PC-9 (cell line): ENCODE measurements at regions of chr1 and their contacts with region 1.

Region 1: DNA sequence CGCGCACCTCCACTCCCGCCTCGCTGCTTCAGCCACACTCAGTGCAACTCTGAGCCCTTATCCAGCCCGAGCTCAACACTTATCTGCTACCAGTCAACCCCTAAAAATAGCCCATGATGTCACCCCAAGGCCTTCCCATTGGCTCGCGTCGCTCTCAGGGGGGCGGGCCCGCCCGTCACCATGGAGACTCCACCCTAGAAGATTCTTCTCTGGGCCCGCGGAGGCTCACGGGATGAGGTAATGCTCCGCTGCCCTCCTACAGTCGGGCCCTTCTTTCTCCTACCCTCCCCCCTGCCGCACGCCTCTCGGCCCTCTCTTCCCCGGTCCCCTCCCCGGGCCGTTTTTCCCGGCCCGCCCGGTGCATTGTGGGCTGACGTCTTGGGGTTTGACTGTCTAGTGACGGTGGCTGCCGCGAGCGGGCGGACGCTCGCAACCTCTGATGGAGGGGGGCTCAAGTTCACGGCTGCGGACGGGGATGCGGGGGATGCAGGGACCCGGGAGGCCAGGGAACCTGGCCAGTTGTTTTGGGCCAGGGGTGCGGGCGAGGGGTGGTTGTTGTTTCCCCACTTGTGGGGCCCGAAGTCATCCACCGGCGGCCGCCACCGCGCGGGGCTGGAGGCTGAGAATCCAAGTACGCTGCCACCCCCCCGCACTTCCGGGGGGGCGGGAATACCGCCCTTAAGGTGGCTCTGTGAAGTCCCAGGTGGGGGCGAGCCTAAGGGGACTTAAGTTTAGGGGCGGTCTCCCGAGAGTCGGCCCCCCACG is at the start of gene JUN:
- DNase-seq: peak; percentile 96 to 99
- H3K4me3 ChIP-seq: peak within 1 kb of the TSS; percentile 94
- H3K27ac ChIP-seq: peak within 1 kb of the TSS; percentile 99
- H3K4me1 ChIP-seq: peaks cover 33% of the 10 kb centered on the region
- H3K27me3 ChIP-seq: no peaks in the 10 kb centered on the region
- CTCF ChIP-seq: no peak
- total RNA-seq, gene JUN: 74.7 and 93.7 TPM in 2 replicates

Region 2: DNA sequence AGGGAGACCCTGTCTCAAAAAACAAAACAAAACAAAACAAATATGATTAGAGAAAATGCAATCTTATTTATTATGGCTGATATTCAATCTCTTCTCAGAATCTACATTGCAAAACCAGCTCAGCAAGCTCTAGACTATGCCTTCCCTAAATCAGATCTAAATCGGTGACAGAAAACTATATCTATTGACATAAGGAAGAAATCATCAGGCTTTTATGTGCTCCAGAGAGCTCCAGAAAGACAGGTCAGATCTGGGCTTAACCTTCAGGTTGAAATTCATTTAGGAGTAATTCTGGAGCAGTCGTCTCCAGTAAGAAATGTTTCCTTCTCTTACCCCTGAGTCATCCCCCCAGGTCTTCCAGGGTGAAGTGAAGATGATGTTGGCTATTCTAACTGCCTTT is 138.1 kb before region 1 on chr1:
- CTCF ChIA-PET with region 1: no interaction called
- POLR2A ChIA-PET with region 1: no interaction called
- intact Hi-C with region 1: no loop called
- DNase-seq: no peak
- H3K4me3 ChIP-seq: no peak overlapping the region
- H3K27ac ChIP-seq: no peak overlapping the region
- H3K4me1 ChIP-seq: no peaks in the 10 kb centered on the region; the same call in 1 of the 2 replicates
- H3K27me3 ChIP-seq: no peaks in the 10 kb centered on the region
- CTCF ChIP-seq: no peak

Region 3: GRCh38 chr1:58816072-58816746 is 32.0 kb after region 1 on chr1:
- CTCF ChIA-PET with region 1: interaction called, 8 read pairs
- POLR2A ChIA-PET with region 1: interaction called, 15 read pairs
- intact Hi-C with region 1: loop called (anchors 1 kb)
- DNase-seq: peak; percentile 76 to 93
- H3K4me3 ChIP-seq: peak overlapping the region; percentile 83
- H3K27ac ChIP-seq: peak overlapping the region; percentile 99
- H3K4me1 ChIP-seq: peaks cover 63% of the 10 kb centered on the region
- H3K27me3 ChIP-seq: no peaks in the 10 kb centered on the region
- CTCF ChIP-seq: no peak

Region 4: GRCh38 chr1:58903514-58904298 is 119.5 kb after region 1 on chr1:
- CTCF ChIA-PET with region 1: no interaction called
- POLR2A ChIA-PET with region 1: interaction called, 20 read pairs
- intact Hi-C with region 1: loop called (anchors 1 kb)
- DNase-seq: peak; percentile 81 to 94
- H3K4me3 ChIP-seq: peak overlapping the region; percentile 63
- H3K27ac ChIP-seq: peak overlapping the region; percentile 90
- H3K4me1 ChIP-seq: peaks cover 69% of the 10 kb centered on the region
- H3K27me3 ChIP-seq: no peaks in the 10 kb centered on the region
- CTCF ChIP-seq: no peak

Region 5: DNA sequence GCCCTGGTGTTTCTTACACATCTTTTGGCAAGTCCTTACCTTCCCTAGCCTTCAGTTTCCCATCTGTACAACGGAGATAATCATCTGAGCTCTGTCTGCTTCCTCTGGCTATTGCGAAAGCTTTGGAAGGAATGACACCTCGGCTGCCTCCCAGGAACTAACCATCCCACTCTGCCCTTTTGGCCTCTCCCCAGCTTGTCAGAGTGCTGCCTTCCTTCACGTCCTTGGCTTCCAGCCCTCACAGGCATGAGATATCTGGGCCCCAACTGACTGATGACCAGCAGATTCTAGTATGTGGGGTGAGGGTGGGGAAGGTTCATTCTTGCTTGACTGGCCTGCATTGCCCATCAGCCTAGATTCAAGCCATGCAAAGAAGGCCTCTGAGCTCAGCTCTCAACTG is 259.6 kb after region 1 on chr1:
- CTCF ChIA-PET with region 1: no interaction called
- POLR2A ChIA-PET with region 1: interaction called, 6 read pairs
- intact Hi-C with region 1: loop called (anchors 5 kb)
- DNase-seq: peak; percentile 85
- H3K4me3 ChIP-seq: no peak overlapping the region
- H3K27ac ChIP-seq: peak overlapping the region; percentile 22; the same call in 1 of the 2 replicates
- H3K4me1 ChIP-seq: peaks cover 30% of the 10 kb centered on the region
- H3K27me3 ChIP-seq: no peaks in the 10 kb centered on the region
- CTCF ChIP-seq: no peak

Region 6: GRCh38 chr1:59296358-59297256 is 512.4 kb after region 1 on chr1 and contains the start of gene FGGY:
- CTCF ChIA-PET with region 1: interaction called, 3 read pairs
- POLR2A ChIA-PET with region 1: interaction called, 11 read pairs
- intact Hi-C with region 1: loop called (anchors 1 kb)
- DNase-seq: peak; percentile 95 to 97
- H3K4me3 ChIP-seq: peak within 1 kb of the TSS; percentile 78
- H3K27ac ChIP-seq: peak within 1 kb of the TSS; percentile 96
- H3K4me1 ChIP-seq: peaks cover 32% of the 10 kb centered on the region
- H3K27me3 ChIP-seq: no peaks in the 10 kb centered on the region
- CTCF ChIP-seq: no peak
- total RNA-seq, gene FGGY: 17.8 and 22.5 TPM in 2 replicates

Region 7: GRCh38 chr1:59551999-59552398 is 767.8 kb after region 1 on chr1:
- CTCF ChIA-PET with region 1: no interaction called
- POLR2A ChIA-PET with region 1: interaction called, 14 read pairs
- intact Hi-C with region 1: no loop called
- DNase-seq: no peak
- H3K4me3 ChIP-seq: no peak overlapping the region
- H3K27ac ChIP-seq: no peak overlapping the region
- H3K4me1 ChIP-seq: no peaks in the 10 kb centered on the region
- H3K27me3 ChIP-seq: no peaks in the 10 kb centered on the region
- CTCF ChIP-seq: no peak